Activated CD4-positive, alpha-beta T cell treated with anti-CD3 and anti-CD28 coated beads, Interleukin-2, amount 10 ng/mL, durations not matched to agents 24 days and 14 days (primary cell): ENCODE measurements at regions of chr17 and their contacts with region 1.

Region 1: DNA sequence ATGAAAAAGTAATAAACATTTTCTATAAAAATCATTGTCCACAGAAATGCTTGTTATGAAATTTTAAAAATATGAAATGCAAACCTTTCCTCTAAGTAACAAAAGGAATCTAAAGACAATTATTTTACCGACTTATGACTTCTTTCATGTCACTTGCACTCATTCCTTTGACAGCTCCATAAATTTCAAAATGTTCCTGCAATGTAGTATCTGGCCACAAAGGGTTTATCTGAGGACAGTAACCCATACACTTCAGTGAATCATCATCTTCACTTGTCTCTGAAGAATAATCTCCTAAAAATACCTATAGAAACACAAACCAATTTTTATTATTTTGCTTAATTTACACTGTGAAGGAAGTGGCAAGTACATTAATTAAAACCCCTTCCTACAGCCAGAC is 25.6 kb upstream of the ABCA10 start:
- DNase-seq: no peak
- H3K4me3 Mint-ChIP-seq: no peak overlapping the region
- H3K27ac Mint-ChIP-seq: no peak overlapping the region
- H3K4me1 Mint-ChIP-seq: no peaks in the 10 kb centered on the region
- H3K27me3 Mint-ChIP-seq: no peaks in the 10 kb centered on the region

Region 2: GRCh38 chr17:69286257-69286656 is 32.1 kb after region 1 on chr17:
- intact Hi-C with region 1: no loop called
- DNase-seq: no peak
- H3K4me3 Mint-ChIP-seq: no peak overlapping the region
- H3K27ac Mint-ChIP-seq: no peak overlapping the region
- H3K4me1 Mint-ChIP-seq: no peaks in the 10 kb centered on the region
- H3K27me3 Mint-ChIP-seq: no peaks in the 10 kb centered on the region

Region 3: GRCh38 chr17:69302682-69303081 is 48.5 kb after region 1 on chr17:
- intact Hi-C with region 1: loop called (anchors 1 kb)
- DNase-seq: no peak
- H3K4me3 Mint-ChIP-seq: no peak overlapping the region
- H3K27ac Mint-ChIP-seq: no peak overlapping the region
- H3K4me1 Mint-ChIP-seq: no peaks in the 10 kb centered on the region
- H3K27me3 Mint-ChIP-seq: no peaks in the 10 kb centered on the region